Heart right ventricle (tissue), 16 donors: ENCODE measurements at regions of chr12 and their contacts with region 1.

Region 1: DNA sequence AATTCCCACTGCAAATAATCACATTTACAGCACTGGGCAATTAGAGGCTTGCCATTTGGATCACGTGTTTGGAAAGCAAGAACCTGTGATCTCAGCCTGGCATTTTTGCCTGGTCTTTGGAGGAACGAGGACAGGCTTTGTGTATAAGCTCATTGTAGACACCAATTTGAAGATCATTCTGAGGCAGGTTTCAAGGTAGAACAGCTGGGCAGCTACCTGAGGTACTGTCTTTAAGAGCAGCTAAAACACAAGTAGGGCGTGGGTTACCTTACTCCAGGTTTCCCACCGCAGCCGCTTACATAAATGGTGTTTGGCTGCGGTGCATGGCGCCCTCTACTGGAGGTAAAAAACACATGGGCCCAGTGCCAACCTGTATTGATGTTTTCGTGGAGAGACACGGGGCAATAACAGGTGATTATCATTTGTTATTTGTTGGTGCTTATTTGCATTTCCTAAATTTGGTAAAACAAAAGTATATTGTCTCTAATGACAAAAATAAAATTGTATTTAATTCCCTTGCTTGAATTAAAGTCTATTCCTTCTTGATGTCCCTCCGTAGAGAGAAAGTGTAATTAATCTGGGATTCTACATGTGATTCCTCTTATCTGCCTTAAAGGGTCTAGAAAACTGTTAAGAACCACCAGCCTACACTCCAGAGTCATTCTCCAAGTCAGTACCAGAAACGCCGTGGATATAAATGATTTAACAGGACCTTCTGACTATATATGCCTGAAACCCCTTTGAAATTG is 69.7 kb downstream of the SVOP start:
- DNase-seq: peak; percentile 58 to 63
- ATAC-seq: peak; percentile 53 to 81 (median 64)
- H3K4me3 ChIP-seq: peak overlapping the region in 1 of 10 donors; percentile 20
- H3K27ac ChIP-seq: peak overlapping the region in 1 of 10 donors; percentile 39
- H3K4me1 ChIP-seq: peaks cover 0 to 26% (median 12%) of the 10 kb centered on the region in 9 donors
- H3K27me3 ChIP-seq: peaks cover 0 to 3% (median 0%) of the 10 kb centered on the region in 7 donors
- CTCF ChIP-seq: peak; percentile 77 to 96 (median 90)

Region 2: DNA sequence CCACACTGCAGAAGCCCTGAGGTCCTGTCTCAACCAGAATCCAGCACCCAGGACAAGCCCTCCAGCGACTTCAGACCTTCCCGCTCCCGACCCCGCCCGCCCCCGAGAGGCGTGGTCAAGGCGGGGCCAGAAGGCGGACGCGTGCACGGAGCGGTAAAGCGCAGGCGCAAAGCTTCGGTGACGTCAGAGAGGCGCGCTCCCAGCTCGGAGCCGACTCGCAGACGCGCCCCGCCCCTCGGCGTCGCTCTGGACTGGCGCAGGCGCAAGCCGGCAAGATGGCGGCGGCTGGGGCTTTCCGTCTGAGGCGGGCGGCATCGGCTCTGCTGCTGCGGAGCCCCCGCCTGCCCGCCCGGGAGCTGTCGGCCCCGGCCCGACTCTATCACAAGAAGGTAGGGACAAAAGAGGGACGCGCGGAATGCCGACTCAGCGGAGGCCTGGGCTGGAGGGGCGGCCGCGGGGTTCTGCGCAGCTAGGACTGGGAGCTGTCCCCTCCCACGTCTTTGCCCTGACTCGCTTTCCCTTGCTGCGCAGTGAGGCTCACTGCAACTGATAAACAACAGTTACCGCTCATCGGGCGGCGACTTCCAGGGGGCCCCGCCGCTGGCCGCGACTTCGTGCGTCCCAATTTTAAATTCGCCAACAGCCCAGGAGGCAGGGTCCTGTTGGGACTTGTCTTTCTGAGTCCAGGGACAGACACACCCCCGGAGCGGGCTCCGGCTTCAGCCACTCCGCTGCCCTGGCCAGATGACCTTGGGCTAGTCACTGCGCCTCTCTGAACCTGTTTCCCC is 388.6 kb before region 1 on chr12 and contains the start of gene ISCU:
- intact Hi-C with region 1: loop called in 8 of 10 experiments (anchors 5 to 10 kb)
- DNase-seq: peak; percentile 98 to 99
- ATAC-seq: peak; percentile 88 to 95 (median 92)
- H3K4me3 ChIP-seq: peak within 1 kb of the TSS; percentile 57 to 99 (median 90)
- H3K27ac ChIP-seq: peak within 1 kb of the TSS; percentile 78 to 97 (median 94)
- H3K4me1 ChIP-seq: peaks cover 5 to 80% (median 67%) of the 10 kb centered on the region in 9 donors
- H3K27me3 ChIP-seq: no peaks in the 10 kb centered on the region
- CTCF ChIP-seq: no peak
- total RNA-seq, gene ISCU: 321 to 630 (median 522) TPM

Region 3: DNA sequence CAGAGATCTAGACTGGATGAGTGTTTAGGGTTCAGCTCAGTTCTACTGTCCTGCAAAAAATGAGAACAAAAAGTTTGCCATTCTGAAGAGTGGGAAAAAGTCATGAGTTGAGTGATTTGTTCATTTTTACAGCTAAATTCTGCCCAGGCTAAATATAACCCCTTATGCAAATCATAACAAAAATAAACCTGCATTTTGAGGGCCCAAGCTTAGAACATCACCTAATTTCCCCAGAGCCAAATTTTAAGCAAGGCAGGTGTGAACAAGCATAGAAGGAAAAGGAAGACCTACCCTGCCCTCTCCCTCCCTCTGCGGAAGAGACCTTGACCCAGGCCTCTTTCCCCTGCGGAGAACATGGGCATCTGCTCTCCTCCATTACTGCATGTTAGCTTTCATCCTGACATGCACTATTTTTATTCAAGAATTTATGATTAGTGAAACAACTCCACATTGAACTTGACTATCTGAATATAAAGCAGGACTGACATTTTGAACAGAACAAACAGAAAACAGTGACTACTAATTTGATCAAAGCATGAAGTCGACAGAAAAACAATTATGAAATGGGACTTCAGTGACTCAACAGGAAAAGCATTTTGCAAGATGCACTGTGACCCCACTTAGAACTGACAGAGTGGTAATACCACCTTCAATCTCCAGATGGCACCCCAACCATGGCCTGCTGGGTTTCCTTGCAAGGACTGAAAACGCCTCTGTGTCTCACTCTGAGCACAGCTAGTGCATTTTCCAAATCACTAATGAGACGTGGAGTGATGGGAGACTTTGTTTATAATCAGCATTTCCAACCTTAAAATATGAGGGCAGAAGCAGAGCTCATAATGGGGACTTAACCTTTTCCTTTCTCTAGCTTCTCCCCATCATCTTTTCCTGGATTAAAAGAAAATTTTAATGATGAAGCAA is 286.6 kb before region 1 on chr12:
- intact Hi-C with region 1: loop called in 8 of 10 experiments (anchors 2 to 10 kb)
- DNase-seq: peak; percentile 53 to 89
- ATAC-seq: peak; percentile 88 to 96 (median 92)
- H3K4me3 ChIP-seq: peak overlapping the region in 1 of 10 donors; percentile 14
- H3K27ac ChIP-seq: peak overlapping the region; percentile 36 to 86 (median 78)
- H3K4me1 ChIP-seq: peaks cover 7 to 71% (median 56%) of the 10 kb centered on the region in 9 donors
- H3K27me3 ChIP-seq: no peaks in the 10 kb centered on the region
- CTCF ChIP-seq: peak; percentile 79 to 99 (median 95)

Region 4: DNA sequence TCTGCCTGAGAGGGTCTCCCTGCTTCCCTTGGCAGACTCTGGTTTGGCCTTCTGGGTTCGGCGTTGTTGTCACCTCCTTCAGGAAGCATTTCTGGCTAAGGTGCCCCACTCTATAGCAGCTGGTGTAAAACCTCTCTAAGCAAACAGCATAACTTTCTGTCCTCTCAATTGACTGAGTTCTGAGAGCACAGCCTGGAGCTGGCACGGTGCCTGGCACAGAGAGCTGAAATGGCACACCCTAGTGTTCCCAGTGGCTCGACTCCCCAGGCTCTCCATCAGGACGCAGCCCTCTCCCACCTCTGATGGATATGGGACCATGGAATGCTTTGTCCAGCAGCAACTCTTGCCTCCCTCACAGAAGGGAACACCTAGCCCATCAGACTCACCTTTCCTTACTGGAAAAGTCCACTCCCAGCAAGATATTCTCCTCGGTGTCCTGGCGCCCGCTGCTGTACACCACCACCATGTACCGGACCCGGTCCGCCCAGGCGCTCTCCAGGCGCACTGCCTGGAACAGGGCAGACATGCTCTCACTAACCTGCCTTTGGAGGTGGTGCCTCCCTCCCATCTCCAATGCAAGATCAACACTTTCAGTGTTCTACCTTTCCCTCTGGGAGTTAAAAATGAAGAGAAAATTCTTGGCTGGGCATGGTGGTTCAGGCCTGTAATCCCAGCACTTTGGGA is 134.4 kb before region 1 on chr12:
- intact Hi-C with region 1: loop called in 1 of 10 experiments (anchors 5 kb)
- DNase-seq: peak in 1 of 2 donors; percentile 73
- ATAC-seq: peak; percentile 22 to 74 (median 42)
- H3K4me3 ChIP-seq: no peak overlapping the region
- H3K27ac ChIP-seq: peak overlapping the region in 9 of 10 donors; percentile 5 to 58 (median 25)
- H3K4me1 ChIP-seq: peaks cover 14 to 82% (median 73%) of the 10 kb centered on the region in 9 donors
- H3K27me3 ChIP-seq: no peaks in the 10 kb centered on the region
- CTCF ChIP-seq: peak in 2 of 9 donors; percentile 14 to 18

Region 5: GRCh38 chr12:109137055-109137454 is 185.9 kb after region 1 on chr12:
- intact Hi-C with region 1: no loop called
- DNase-seq: no peak
- ATAC-seq: peak in 3 of 8 donors; percentile 26 to 52 (median 40)
- H3K4me3 ChIP-seq: no peak overlapping the region
- H3K27ac ChIP-seq: peak overlapping the region; percentile 21 to 63 (median 39)
- H3K4me1 ChIP-seq: peaks cover 0 to 80% (median 42%) of the 10 kb centered on the region in 9 donors
- H3K27me3 ChIP-seq: no peaks in the 10 kb centered on the region
- CTCF ChIP-seq: no peak